Aorta (tissue), 5 donors: ENCODE measurements at regions of chr14 and their contacts with region 1.

Region 1: DNA sequence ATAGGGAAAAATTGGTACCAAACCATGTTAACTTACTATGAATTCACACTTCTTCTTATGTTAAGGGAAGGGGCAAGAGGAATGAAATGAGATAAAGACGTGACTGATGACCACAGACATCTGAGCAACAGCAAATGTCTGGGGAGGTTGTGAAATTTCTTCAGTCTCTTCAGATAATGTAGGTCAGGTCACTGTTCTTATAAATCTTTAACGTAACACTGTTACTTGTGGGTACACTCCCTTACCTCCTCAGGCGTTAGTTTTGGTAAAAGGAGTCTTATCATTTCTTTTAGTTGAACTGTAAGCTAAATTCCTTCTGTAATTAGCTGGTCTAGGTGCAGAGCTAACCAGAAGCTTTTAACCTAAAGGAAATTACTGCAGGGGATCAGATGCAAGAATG is 405.0 kb upstream of the LRFN5 start:
- DNase-seq: no peak
- ATAC-seq: no peak
- H3K4me3 ChIP-seq: no peak overlapping the region
- H3K27ac ChIP-seq: no peak overlapping the region
- H3K4me1 ChIP-seq: no peaks in the 10 kb centered on the region
- H3K27me3 ChIP-seq: no peaks in the 10 kb centered on the region

Region 2: GRCh38 chr14:41137741-41138140 is 64.0 kb before region 1 on chr14:
- intact Hi-C with region 1: loop called in 1 of 2 experiments (anchors 2 kb)
- DNase-seq: no peak
- ATAC-seq: no peak
- H3K4me3 ChIP-seq: no peak overlapping the region
- H3K27ac ChIP-seq: no peak overlapping the region
- H3K4me1 ChIP-seq: no peaks in the 10 kb centered on the region
- H3K27me3 ChIP-seq: no peaks in the 10 kb centered on the region

Region 3: GRCh38 chr14:41235466-41235865 is 33.7 kb after region 1 on chr14:
- intact Hi-C with region 1: no loop called
- DNase-seq: no peak
- ATAC-seq: no peak
- H3K4me3 ChIP-seq: no peak overlapping the region
- H3K27ac ChIP-seq: no peak overlapping the region
- H3K4me1 ChIP-seq: no peaks in the 10 kb centered on the region
- H3K27me3 ChIP-seq: no peaks in the 10 kb centered on the region